Activated CD4-positive, alpha-beta T cell treated with anti-CD3 and anti-CD28 coated beads for 36 hours (primary cell): ENCODE measurements at regions of chr1 and their contacts with region 1.

Region 1: DNA sequence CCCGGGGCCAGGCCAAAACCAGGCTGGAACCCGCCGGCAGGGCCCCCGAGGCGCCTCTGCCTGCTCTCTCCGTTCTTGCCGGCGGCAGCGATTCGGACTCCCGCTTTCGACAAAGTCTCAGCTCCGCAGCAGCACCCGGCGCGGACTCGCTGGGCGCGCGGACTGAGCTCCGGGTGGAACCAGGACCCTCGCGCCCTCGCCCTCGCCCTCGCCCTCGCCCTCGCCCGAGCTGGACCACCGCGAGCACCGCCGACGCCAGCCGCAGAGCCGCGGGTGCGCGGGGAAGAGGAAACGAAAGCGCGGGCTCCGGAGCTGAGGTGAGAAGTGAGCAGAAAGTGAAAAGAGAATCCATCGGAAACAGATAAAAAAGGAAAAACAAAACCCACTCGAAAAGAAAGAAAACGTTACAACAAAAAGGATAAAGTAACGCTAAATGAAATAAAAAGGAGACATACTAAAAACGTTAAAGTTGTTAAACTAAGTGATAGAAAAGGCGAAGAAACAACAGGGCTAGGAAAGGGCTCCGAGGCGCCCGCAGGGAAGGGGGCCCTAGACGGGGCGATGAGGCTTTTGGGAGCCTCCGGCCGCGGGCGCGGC is 64.9 kb downstream of the MEF2D start:
- DNase-seq: peak; percentile 54
- ATAC-seq: no peak
- H3K4me3 Mint-ChIP-seq: peak overlapping the region; percentile 64
- H3K27ac Mint-ChIP-seq: no peak overlapping the region
- H3K4me1 Mint-ChIP-seq: peaks cover 38% of the 10 kb centered on the region
- H3K27me3 Mint-ChIP-seq: peaks cover 81% of the 10 kb centered on the region

Region 2: DNA sequence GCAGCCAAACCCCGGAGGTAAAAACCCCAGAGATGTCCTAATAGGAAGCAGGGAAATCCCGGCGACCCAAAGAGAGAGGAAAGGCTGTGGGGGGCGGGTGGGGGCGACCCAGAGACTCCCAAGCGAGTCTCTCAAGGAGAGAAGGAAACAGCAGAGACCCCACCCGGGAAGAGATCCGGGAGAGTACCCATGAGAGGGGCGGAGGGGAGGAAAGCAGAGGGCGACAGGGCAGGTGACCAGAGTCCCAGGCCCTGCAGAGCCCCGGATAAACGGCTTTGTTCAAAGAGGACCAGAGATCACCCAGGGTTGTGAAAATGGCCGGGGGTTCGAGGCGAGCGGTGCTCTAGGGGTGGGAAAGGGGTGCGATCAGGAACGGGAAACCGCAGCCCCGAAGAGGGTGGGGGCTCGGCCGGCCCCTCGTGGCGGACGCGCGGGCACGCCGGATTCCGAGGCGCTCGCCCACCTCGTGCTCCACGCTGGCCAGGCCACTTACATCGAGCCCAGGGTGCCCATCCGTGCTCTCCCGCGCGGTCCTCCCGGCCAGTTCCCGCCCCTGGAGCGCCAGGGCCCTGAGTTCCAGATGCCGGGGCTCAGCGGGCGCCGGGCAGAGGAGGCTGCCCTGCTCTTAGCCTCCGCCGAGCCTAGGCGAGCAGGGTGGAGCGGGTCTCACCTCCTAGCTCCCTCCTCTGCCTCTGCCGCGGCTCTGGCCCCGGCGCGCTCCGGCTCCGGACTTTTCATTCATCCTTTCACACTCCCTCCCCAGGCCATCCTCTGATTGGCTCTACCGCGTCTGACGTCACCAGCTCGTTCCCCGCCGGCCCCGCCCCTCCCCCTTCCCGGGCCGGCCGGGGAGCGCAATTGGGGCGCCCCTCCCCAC is 14.3 kb before region 1 on chr1:
- CTCF ChIA-PET with region 1: interaction called, 11 read pairs
- POLR2A ChIA-PET with region 1: interaction called, 3 read pairs
- intact Hi-C with region 1: loop called (anchors 1 to 2 kb)
- DNase-seq: peak; percentile 85
- ATAC-seq: peak; percentile 92
- H3K4me3 Mint-ChIP-seq: peak overlapping the region; percentile 70
- H3K27ac Mint-ChIP-seq: no peak overlapping the region
- H3K4me1 Mint-ChIP-seq: peaks cover 17% of the 10 kb centered on the region
- H3K27me3 Mint-ChIP-seq: peaks cover 75% of the 10 kb centered on the region